ENCODE measurements at regions of chr12 and their contacts with region 1.

Region 1: DNA sequence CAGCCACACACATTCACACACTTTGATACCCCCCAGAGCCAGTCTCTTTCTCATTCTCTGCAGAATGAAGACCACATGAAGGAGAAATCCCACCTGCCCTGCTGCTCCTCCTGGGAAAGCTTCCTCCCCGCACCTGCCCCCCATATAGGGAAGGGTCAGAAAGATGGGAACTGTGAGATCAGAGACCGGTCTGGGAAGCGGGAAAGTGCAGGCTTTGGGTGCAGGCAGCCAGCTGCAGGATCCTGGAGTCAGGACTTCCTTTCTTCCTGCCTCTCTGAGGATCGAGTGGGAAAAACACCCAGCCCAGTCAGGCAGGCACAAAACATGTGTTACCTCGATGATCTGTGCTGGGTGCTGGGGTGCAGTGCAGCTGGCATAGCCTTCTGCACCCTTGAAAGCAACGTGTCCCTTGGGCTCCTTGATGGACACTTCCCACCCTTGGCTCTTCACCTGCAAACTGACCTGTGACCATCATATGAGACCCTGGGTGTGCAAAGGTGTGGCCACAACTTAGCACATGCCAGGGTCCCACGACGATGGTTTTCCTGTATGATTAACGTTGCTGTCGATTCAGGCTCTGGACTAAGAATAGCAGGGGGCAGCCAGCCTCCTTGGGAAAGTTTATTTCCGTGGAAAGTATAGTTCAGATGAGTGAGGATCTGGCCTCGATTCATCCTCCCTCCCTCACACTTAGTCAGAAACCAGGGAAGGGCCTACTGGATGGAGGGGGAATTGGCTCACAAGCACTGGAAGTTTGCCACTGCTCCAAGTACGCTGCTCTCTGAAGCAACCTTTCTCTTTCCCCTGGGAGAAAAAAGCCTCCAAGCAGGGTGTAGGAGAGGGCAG is 105.4 kb upstream of the MED13L start:
- DNase-seq: no peak
- H3K4me3 ChIP-seq: no peak overlapping the region
- H3K27ac ChIP-seq: peak overlapping the region in 3 of 4 donors; percentile 4 to 45 (median 40)
- H3K4me1 ChIP-seq: peaks cover 15 to 41% (median 32%) of the 10 kb centered on the region in 4 donors
- H3K27me3 ChIP-seq: no peaks in the 10 kb centered on the region
- CTCF ChIP-seq: no peak
- EP300 ChIP-seq: no peak
- POLR2A ChIP-seq: no peak

Region 2: DNA sequence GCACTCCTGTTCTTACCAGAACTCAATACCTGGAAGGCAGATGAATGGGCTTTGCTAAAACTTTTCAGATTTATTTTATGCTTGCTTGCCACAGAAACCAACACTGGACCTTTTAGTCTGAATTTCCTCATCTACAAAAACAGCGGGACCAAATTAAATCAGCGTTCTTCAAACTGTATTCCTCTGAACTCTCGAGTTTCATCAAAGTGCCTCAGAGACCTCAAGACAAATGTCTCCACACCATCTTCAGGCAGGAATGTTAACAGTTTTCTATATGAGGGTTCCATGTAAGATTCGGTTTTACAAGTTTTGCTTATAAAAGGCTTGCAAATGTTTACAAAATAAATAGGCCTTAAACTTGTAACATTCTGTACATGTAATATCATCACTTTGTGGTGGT is 180.0 kb before region 1 on chr12:
- intact Hi-C with region 1: no loop called
- DNase-seq: no peak
- H3K4me3 ChIP-seq: no peak overlapping the region
- H3K27ac ChIP-seq: no peak overlapping the region
- H3K4me1 ChIP-seq: peaks cover 26 to 88% (median 75%) of the 10 kb centered on the region in 4 donors
- H3K27me3 ChIP-seq: no peaks in the 10 kb centered on the region
- CTCF ChIP-seq: peak in 1 of 3 experiments; percentile 16
- EP300 ChIP-seq: no peak
- POLR2A ChIP-seq: no peak

Region 3: DNA sequence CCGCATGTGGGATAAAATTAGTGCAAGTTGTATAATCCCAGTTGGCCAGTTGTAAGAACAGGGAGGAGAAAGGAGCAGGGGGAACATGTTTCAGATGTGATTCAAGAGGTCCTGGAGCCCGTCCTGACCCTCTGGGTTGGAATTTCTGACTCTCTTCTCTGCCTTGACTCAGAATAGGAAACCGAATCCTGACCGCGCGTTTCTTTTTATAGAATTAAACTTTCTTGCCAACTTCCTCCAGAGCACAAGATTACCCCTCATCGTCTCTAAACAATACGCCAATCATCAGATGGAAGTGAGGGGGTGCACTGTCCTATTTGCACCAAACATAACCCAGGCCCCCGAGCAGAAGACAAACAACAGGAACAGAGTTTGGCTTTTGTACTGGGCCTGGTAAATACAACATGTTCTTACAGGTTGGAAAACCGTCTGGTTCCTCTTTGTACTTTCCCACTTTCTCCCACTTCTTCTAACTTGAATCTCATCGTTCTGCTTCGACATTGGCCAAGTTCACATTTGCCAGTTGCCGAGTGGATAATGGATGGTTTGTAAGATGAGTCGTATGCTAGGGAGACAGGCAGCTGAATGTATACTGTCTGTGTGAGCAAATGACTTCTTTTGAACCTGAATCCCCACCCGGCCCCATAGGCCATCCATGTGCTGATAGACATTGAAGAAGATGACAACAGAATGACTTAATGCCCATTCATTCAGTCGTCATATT is 62.8 kb before region 1 on chr12:
- intact Hi-C with region 1: loop called (anchors 10 kb)
- DNase-seq: peak; percentile 95
- H3K4me3 ChIP-seq: peak overlapping the region in 3 of 4 donors; percentile 31 to 39 (median 36)
- H3K27ac ChIP-seq: peak overlapping the region; percentile 83 to 86 (median 84)
- H3K4me1 ChIP-seq: peaks cover 30 to 50% (median 41%) of the 10 kb centered on the region in 4 donors
- H3K27me3 ChIP-seq: no peaks in the 10 kb centered on the region
- CTCF ChIP-seq: no peak
- EP300 ChIP-seq: peak; percentile 22
- POLR2A ChIP-seq: no peak

Region 4: DNA sequence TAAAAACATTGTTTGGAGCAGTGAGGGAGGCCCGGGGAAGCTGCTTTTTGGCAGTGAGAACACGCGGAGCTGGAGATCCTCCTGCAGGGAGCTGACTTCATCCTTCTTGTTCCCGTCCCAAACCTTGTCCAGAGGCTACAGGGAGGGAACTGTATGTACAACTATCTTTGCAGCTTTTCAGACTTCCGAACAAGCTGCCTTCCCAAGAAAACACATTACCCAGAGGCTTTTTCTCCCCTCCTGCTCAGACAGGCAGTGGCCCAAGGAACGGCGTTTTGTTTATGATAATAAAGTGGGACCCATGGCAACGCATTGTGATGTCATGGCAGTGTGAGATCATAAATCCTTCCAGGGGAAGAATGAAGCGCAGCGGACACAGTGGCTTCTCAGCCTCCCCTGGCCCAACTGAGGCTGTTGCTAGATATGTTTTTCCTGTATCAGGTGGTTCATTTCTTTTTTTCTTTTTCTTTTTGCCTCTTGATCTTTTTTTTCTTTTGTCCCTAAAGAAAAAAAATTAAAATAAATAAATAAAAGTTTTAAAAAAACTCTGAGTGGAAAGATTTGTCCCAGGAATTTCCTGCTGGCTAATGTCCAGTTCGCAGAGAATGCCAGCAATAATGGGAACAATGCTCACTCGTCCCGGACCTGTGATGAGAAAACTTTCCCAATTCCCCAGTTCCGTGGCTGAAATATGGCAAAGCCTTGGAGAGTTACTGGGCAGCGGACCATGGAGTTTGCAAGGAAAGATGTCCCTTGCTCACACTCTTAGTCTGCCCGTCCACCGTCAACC is 72.8 kb after region 1 on chr12:
- intact Hi-C with region 1: loop called (anchors 5 kb)
- DNase-seq: peak; percentile 96
- H3K4me3 ChIP-seq: peak overlapping the region; percentile 9 to 20 (median 20)
- H3K27ac ChIP-seq: peak overlapping the region; percentile 72 to 88 (median 84)
- H3K4me1 ChIP-seq: peaks cover 11 to 30% (median 27%) of the 10 kb centered on the region in 4 donors
- H3K27me3 ChIP-seq: peaks cover 0 to 5% (median 0%) of the 10 kb centered on the region in 4 donors
- CTCF ChIP-seq: no peak
- EP300 ChIP-seq: peak; percentile 80
- POLR2A ChIP-seq: no peak

Region 5: GRCh38 chr12:117646520-117646919 is 1263.6 kb after region 1 on chr12:
- intact Hi-C with region 1: no loop called
- DNase-seq: no peak
- H3K4me3 ChIP-seq: no peak overlapping the region
- H3K27ac ChIP-seq: no peak overlapping the region
- H3K4me1 ChIP-seq: no peaks in the 10 kb centered on the region
- H3K27me3 ChIP-seq: peaks cover 0 to 36% (median 3%) of the 10 kb centered on the region in 4 donors
- CTCF ChIP-seq: no peak
- EP300 ChIP-seq: no peak
- POLR2A ChIP-seq: no peak

Measured in esophagus muscularis mucosa (tissue), 4 donors.